ENCODE measurements at regions of chr10 and their contacts with region 1.

Region 1: GRCh38 chr10:49407552-49408137 is 11.8 kb upstream of the DRGX start:
- DNase-seq: peak; percentile 41 to 77 (median 61)
- H3K4me3 ChIP-seq: no peak overlapping the region
- H3K4me3 Mint-ChIP-seq: no peak overlapping the region
- H3K27ac ChIP-seq: no peak overlapping the region
- H3K27ac Mint-ChIP-seq: peak overlapping the region in 1 of 8 donors; percentile 93
- H3K4me1 ChIP-seq: no peaks in the 10 kb centered on the region
- H3K4me1 Mint-ChIP-seq: no peaks in the 10 kb centered on the region
- H3K27me3 ChIP-seq: peaks cover 19% of the 10 kb centered on the region
- H3K27me3 Mint-ChIP-seq: peaks cover 25 to 60% of the 10 kb centered on the region in 2 donors

Region 2: GRCh38 chr10:49387029-49387428 is 20.6 kb before region 1 on chr10:
- CTCF ChIA-PET with region 1: no interaction called
- POLR2A ChIA-PET with region 1: no interaction called
- DNase-seq: no peak
- H3K4me3 ChIP-seq: no peak overlapping the region
- H3K4me3 Mint-ChIP-seq: peak overlapping the region in 1 of 7 donors; percentile 54
- H3K27ac ChIP-seq: no peak overlapping the region
- H3K27ac Mint-ChIP-seq: no peak overlapping the region
- H3K4me1 ChIP-seq: no peaks in the 10 kb centered on the region
- H3K4me1 Mint-ChIP-seq: no peaks in the 10 kb centered on the region
- H3K27me3 ChIP-seq: peaks cover 4% of the 10 kb centered on the region
- H3K27me3 Mint-ChIP-seq: peaks cover 16 to 52% of the 10 kb centered on the region in 2 donors

Region 3: GRCh38 chr10:49441488-49442476 is 34.1 kb after region 1 on chr10:
- CTCF ChIA-PET with region 1: no interaction called
- POLR2A ChIA-PET with region 1: no interaction called
- DNase-seq: peak in 3 of 5 donors; percentile 14 to 38 (median 17)
- H3K4me3 ChIP-seq: no peak overlapping the region
- H3K4me3 Mint-ChIP-seq: peak overlapping the region; percentile 58 to 87 (median 72)
- H3K27ac ChIP-seq: no peak overlapping the region
- H3K27ac Mint-ChIP-seq: peak overlapping the region in 6 of 8 donors; percentile 9 to 92 (median 60)
- H3K4me1 ChIP-seq: peaks cover 8% of the 10 kb centered on the region
- H3K4me1 Mint-ChIP-seq: peaks cover 18 to 31% (median 25%) of the 10 kb centered on the region in 3 donors
- H3K27me3 ChIP-seq: no peaks in the 10 kb centered on the region
- H3K27me3 Mint-ChIP-seq: no peaks in the 10 kb centered on the region

Region 4: DNA sequence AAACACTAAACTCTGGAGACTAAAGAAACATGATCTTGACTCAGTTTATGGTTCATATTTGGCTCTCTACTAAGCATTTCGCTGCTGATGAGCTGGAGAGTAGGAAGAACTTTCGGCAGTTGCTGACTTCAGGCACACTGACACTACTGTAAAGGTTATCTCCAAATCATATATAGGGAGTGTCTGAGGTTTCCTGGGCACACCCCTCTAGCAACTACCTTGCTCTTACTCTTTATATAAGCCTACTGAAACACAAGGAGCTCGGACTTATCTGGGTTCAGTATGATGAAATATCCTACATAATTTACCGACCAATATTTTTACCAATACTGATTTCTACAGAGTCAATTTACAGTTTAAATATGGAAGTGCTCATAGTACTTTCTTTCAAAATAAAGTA is 91.7 kb after region 1 on chr10:
- CTCF ChIA-PET with region 1: no interaction called
- POLR2A ChIA-PET with region 1: no interaction called
- DNase-seq: no peak
- H3K4me3 ChIP-seq: no peak overlapping the region
- H3K4me3 Mint-ChIP-seq: no peak overlapping the region
- H3K27ac ChIP-seq: no peak overlapping the region
- H3K27ac Mint-ChIP-seq: no peak overlapping the region
- H3K4me1 ChIP-seq: no peaks in the 10 kb centered on the region
- H3K4me1 Mint-ChIP-seq: peaks cover 0 to 17% (median 6%) of the 10 kb centered on the region in 3 donors
- H3K27me3 ChIP-seq: no peaks in the 10 kb centered on the region
- H3K27me3 Mint-ChIP-seq: no peaks in the 10 kb centered on the region

Region 5: DNA sequence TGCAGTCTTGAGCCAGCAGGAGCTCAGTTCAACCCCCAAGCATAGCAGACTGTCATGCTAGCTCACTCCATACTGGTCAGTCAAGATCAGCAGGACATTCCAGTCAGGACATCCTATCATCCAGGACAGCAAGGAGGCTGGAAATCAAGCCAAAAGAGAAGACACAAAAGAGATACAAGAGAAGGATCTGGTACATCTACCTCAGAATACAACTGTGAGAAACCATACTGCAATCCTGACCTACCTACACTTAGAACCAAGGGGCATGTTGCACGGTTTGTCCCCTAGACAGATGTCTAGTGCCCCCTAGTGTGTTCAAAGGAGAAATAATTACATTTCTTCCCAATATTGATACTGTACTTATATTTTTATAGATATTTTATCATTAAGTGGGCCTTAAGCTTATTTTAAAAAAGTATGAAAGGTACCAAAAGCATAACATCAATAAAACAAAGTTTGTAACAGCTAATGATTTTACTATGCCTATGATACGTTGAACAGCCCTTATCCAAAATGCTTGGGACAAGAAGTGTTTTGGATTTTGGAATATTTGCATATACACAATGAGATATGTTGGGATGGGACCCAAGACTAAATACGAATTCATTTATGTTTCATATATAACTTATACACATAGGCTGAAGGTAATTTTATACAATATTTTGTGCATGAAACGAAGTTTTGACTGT is 104.6 kb after region 1 on chr10:
- CTCF ChIA-PET with region 1: interaction called, 79 read pairs
- POLR2A ChIA-PET with region 1: no interaction called
- DNase-seq: peak in 2 of 5 donors; percentile 30 to 34
- H3K4me3 ChIP-seq: no peak overlapping the region
- H3K4me3 Mint-ChIP-seq: no peak overlapping the region
- H3K27ac ChIP-seq: no peak overlapping the region
- H3K27ac Mint-ChIP-seq: no peak overlapping the region
- H3K4me1 ChIP-seq: peaks cover 20% of the 10 kb centered on the region
- H3K4me1 Mint-ChIP-seq: peaks cover 24 to 28% (median 27%) of the 10 kb centered on the region in 3 donors
- H3K27me3 ChIP-seq: no peaks in the 10 kb centered on the region
- H3K27me3 Mint-ChIP-seq: peaks cover 0 to 3% of the 10 kb centered on the region in 2 donors

Region 6: DNA sequence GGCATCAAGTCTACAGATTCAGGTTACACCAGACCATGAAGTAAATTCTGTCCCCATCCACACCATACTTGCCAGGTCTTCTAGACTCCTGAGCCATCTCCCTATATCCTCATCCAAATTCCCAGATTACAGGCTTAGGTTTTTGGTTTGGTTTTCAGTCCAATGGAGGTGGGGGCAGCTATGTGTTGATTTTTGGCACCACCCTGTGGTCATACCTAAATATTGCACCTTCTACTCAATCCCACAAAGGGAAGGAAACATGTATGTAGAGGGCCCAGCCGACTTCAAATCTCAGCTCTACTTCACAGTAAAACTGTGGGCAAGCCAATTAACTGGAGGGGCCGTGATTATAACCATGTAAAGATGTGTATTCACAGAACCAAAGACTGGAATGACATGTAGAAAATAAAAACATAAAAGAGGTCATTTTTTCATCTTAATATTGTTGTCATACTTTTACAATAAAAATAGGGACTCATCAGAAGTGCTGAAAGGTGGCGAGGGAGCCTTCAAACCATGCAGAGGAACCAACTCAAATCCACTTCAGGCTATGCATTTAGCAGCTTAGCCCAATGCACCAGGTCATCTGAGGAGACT is 111.4 kb after region 1 on chr10:
- CTCF ChIA-PET with region 1: interaction called, 79 read pairs
- POLR2A ChIA-PET with region 1: no interaction called
- DNase-seq: peak in 1 of 5 donors; percentile 33
- H3K4me3 ChIP-seq: no peak overlapping the region
- H3K4me3 Mint-ChIP-seq: no peak overlapping the region
- H3K27ac ChIP-seq: no peak overlapping the region
- H3K27ac Mint-ChIP-seq: no peak overlapping the region
- H3K4me1 ChIP-seq: no peaks in the 10 kb centered on the region
- H3K4me1 Mint-ChIP-seq: peaks cover 6 to 9% (median 8%) of the 10 kb centered on the region in 3 donors
- H3K27me3 ChIP-seq: no peaks in the 10 kb centered on the region
- H3K27me3 Mint-ChIP-seq: no peaks in the 10 kb centered on the region

Region 7: DNA sequence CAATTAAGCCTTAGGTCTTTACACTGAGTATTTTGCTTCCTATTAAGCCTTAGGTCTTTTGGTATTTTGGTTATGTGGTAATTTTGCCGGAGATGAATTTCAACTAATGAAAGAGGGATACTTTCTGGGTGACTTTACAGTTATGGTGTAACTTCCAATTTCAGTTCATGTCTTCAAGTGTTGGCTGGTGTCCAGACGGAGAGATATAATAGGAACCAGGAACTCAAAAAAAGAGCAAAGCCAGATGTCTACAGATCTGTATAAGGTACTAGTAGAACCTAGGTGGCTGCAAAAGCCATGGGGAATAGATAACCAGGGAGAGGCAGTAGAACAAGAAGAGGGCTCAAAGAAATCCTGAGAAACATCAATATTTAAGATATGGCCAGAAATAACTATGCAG is 119.0 kb after region 1 on chr10:
- CTCF ChIA-PET with region 1: interaction called, 14 read pairs
- POLR2A ChIA-PET with region 1: no interaction called
- DNase-seq: no peak
- H3K4me3 ChIP-seq: no peak overlapping the region
- H3K4me3 Mint-ChIP-seq: no peak overlapping the region
- H3K27ac ChIP-seq: no peak overlapping the region
- H3K27ac Mint-ChIP-seq: peak overlapping the region in 2 of 8 donors; percentile 27 to 62
- H3K4me1 ChIP-seq: no peaks in the 10 kb centered on the region
- H3K4me1 Mint-ChIP-seq: peaks cover 11 to 21% (median 21%) of the 10 kb centered on the region in 3 donors
- H3K27me3 ChIP-seq: no peaks in the 10 kb centered on the region
- H3K27me3 Mint-ChIP-seq: peaks cover 0 to 1% of the 10 kb centered on the region in 2 donors